ENCODE measurements at regions of chr5 and their contacts with region 1.

Region 1: GRCh38 chr5:82351754-82352145 is 73.6 kb upstream of the RPS23 start:
- DNase-seq: peak; percentile 73
- H3K4me3 ChIP-seq: no peak overlapping the region
- H3K27ac ChIP-seq: no peak overlapping the region
- H3K4me1 ChIP-seq: no peaks in the 10 kb centered on the region
- H3K27me3 ChIP-seq: no peaks in the 10 kb centered on the region
- CTCF ChIP-seq: peak; percentile 73

Region 2: GRCh38 chr5:81856948-81857928 is 494.5 kb before region 1 on chr5:
- CTCF ChIA-PET with region 1: no interaction called
- POLR2A ChIA-PET with region 1: no interaction called
- intact Hi-C with region 1: no loop called
- DNase-seq: peak; percentile 40
- H3K4me3 ChIP-seq: no peak overlapping the region
- H3K27ac ChIP-seq: no peak overlapping the region
- H3K4me1 ChIP-seq: peaks cover 34% of the 10 kb centered on the region
- H3K27me3 ChIP-seq: no peaks in the 10 kb centered on the region
- CTCF ChIP-seq: peak; percentile 66

Region 3: GRCh38 chr5:82158755-82159413 is 192.9 kb before region 1 on chr5:
- CTCF ChIA-PET with region 1: no interaction called
- POLR2A ChIA-PET with region 1: no interaction called
- intact Hi-C with region 1: no loop called
- DNase-seq: no peak
- H3K4me3 ChIP-seq: no peak overlapping the region
- H3K27ac ChIP-seq: no peak overlapping the region
- H3K4me1 ChIP-seq: peaks cover 32% of the 10 kb centered on the region
- H3K27me3 ChIP-seq: no peaks in the 10 kb centered on the region
- CTCF ChIP-seq: no peak

Region 4: GRCh38 chr5:82312373-82312856 is 39.3 kb before region 1 on chr5:
- CTCF ChIA-PET with region 1: no interaction called
- POLR2A ChIA-PET with region 1: no interaction called
- intact Hi-C with region 1: loop called (anchors 2 kb)
- DNase-seq: peak; percentile 83
- H3K4me3 ChIP-seq: no peak overlapping the region
- H3K27ac ChIP-seq: no peak overlapping the region
- H3K4me1 ChIP-seq: peaks cover 7% of the 10 kb centered on the region
- H3K27me3 ChIP-seq: no peaks in the 10 kb centered on the region
- CTCF ChIP-seq: peak; percentile 96

Region 5: DNA sequence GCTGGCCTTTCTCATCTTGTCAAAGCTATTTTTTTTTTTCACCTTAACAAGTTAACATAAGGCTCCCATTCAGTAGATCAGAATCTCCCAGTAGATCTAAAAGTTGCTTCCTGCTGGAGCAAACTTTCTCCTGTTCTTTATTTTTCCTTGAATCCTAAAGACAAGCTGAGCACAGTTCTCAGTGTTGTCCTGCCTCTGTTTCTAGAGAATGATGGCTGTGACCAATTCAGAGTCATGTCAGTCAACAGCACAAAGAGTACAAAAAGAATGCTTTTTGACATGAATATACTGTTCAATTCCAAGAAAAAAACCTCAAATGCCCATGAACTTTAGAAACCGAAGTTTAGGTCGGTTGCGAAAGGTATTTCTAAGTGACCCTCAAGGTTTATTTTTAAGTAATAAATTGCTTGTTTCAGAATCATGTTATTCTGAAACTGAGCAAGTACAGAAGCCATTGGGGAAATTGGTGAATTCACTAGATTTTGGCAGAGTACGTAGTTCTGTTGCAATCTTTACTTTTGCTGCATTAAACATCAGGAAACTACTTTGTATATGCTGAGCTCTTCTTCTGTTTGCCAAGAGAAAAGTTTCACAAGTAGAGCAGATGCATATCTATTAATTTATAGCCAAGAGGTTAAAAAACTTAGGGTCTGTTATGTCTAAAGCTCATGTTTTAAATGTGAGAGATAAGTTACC is 88.1 kb after region 1 on chr5:
- CTCF ChIA-PET with region 1: no interaction called
- POLR2A ChIA-PET with region 1: no interaction called
- intact Hi-C with region 1: no loop called
- DNase-seq: no peak
- H3K4me3 ChIP-seq: no peak overlapping the region
- H3K27ac ChIP-seq: no peak overlapping the region
- H3K4me1 ChIP-seq: no peaks in the 10 kb centered on the region
- H3K27me3 ChIP-seq: no peaks in the 10 kb centered on the region
- CTCF ChIP-seq: no peak

Region 6: DNA sequence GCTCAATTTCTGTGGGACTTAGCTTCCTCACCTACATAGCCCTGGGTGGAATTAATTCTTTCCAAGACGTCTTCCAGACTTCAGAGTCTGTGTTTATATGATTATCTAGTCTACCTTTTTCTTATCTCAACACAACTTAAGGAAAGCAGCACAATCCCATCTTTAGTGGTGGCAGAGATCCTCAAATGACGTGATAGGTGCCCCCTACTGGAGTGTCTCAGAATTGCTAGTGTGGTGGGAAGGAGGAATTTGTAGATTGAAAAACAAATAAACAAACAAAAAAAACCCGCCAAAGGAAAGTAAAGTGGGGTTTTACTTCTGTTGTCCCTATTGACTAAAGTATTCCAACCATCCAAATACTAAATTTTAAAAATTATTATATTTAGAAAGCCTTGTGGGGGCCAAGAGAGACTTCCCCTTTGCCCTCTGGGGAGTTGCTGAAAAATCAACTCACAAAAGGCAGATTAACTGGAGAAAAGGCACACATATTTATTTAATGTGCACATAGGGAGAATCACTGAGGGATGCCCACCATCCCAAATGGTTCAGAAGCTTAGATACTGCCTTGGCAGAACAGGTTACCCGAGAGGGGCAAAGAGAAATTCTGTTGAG is 442.2 kb after region 1 on chr5:
- CTCF ChIA-PET with region 1: no interaction called
- POLR2A ChIA-PET with region 1: no interaction called
- intact Hi-C with region 1: loop called (anchors 5 kb)
- DNase-seq: peak; percentile 63
- H3K4me3 ChIP-seq: no peak overlapping the region
- H3K27ac ChIP-seq: no peak overlapping the region
- H3K4me1 ChIP-seq: peaks cover 22% of the 10 kb centered on the region
- H3K27me3 ChIP-seq: no peaks in the 10 kb centered on the region
- CTCF ChIP-seq: peak; percentile 90

Region 7: DNA sequence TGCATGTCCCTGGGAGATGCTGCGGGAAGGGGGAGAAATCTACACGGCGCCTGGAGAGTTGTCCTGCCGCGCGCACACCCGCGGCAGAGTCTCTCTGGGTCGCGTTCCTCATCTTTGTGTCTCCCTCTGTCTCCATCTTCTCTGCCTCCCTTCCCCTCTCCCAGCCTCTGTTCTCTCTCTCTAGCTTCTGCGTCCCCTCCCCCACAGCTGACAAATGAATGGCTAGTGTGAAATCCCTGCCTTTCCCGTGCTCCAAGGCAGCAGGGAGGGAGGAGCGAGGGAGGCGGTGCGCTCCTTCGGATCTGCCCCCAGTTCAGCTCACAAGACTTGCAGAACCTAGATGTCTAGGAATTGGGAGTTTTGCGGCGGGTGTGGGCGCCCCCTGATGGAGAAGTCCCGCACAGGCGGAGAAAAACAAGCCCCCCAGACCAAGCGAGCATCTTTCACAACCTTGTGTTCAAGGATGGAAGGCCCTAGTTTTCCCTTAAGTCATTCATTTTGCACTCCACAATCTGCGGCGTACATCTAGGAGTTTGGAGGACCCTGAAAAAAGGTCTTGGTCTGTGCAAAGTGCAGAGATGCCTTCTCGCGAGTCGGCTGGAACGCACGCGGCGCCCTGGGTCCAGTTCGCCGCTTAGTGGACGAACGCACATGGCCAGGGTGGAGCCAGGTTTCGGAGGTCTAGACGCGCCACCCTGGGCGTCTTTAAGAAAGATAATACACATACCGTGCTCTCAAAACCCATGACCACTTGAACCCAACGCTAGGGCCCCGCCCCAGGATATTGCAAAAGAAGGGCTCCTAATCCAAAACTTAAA is 1121.8 kb after region 1 on chr5:
- CTCF ChIA-PET with region 1: interaction called, 3 read pairs
- POLR2A ChIA-PET with region 1: no interaction called
- intact Hi-C with region 1: loop called (anchors 5 kb)
- DNase-seq: peak; percentile 93
- H3K4me3 ChIP-seq: peak overlapping the region; percentile 45
- H3K27ac ChIP-seq: no peak overlapping the region
- H3K4me1 ChIP-seq: peaks cover 44% of the 10 kb centered on the region
- H3K27me3 ChIP-seq: peaks cover 48% of the 10 kb centered on the region
- CTCF ChIP-seq: peak; percentile 91

Region 8: DNA sequence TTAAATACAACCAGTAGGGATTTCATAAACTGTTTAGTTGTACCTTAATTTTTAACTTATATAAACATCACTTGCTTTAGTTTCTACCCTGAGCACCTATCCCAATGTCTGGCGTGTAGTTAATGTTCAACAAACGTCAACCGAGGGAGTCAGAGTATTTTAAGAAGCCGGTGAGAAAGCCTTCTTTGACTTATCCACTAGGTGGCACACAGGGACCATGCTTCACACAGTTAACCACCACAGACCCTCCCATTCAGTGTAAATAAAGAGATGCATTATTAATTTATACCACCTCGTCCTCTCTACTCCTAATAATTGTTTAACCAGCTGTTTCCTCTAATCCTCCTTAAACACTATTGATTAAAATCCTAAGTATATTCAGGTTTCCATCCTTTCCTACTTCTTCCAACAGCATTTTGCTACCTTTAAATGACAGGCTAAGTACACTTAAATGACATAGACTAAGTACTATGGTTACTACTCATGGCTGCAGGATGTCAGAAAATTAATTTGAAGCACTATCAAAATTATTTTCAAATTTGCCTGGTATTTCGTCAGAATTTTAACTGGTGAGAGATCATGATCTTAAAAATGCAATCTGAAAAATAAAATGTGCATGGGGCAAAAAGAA is 1366.6 kb after region 1 on chr5:
- CTCF ChIA-PET with region 1: no interaction called
- POLR2A ChIA-PET with region 1: no interaction called
- intact Hi-C with region 1: loop called (anchors 10 kb)
- DNase-seq: peak; percentile 80
- H3K4me3 ChIP-seq: no peak overlapping the region
- H3K27ac ChIP-seq: no peak overlapping the region
- H3K4me1 ChIP-seq: peaks cover 3% of the 10 kb centered on the region
- H3K27me3 ChIP-seq: no peaks in the 10 kb centered on the region
- CTCF ChIP-seq: peak; percentile 87

Measured in A673 (cell line).